Heart right ventricle (tissue), 16 donors: ENCODE measurements at regions of chr15 and their contacts with region 1.

Region 1: GRCh38 chr15:57146506-57147201 is 228.2 kb downstream of the TCF12 start:
- DNase-seq: peak in 1 of 2 donors; percentile 57
- ATAC-seq: peak in 7 of 8 donors; percentile 39 to 76 (median 65)
- H3K4me3 ChIP-seq: peak overlapping the region in 7 of 10 donors; percentile 9 to 43 (median 33)
- H3K27ac ChIP-seq: peak overlapping the region in 7 of 10 donors; percentile 36 to 62 (median 54)
- H3K4me1 ChIP-seq: peaks cover 0 to 53% (median 44%) of the 10 kb centered on the region in 9 donors
- H3K27me3 ChIP-seq: no peaks in the 10 kb centered on the region
- CTCF ChIP-seq: peak; percentile 55 to 88 (median 82)

Region 2: GRCh38 chr15:56496635-56497034 is 650.0 kb before region 1 on chr15:
- intact Hi-C with region 1: loop called in 2 of 10 experiments (anchors 5 to 10 kb)
- DNase-seq: peak in 1 of 2 donors; percentile 6
- ATAC-seq: peak in 6 of 8 donors; percentile 61 to 85 (median 80)
- H3K4me3 ChIP-seq: no peak overlapping the region
- H3K27ac ChIP-seq: no peak overlapping the region
- H3K4me1 ChIP-seq: peaks cover 0 to 4% (median 0%) of the 10 kb centered on the region in 9 donors
- H3K27me3 ChIP-seq: peaks cover 0 to 5% (median 0%) of the 10 kb centered on the region in 7 donors
- CTCF ChIP-seq: peak; percentile 24 to 85 (median 75)

Region 3: GRCh38 chr15:56886932-56887781 is 259.5 kb before region 1 on chr15:
- intact Hi-C with region 1: loop called in 1 of 10 experiments (anchors 10 kb)
- DNase-seq: peak; percentile 95 to 96
- ATAC-seq: peak; percentile 97 to 99 (median 98)
- H3K4me3 ChIP-seq: peak overlapping the region; percentile 51 to 78 (median 68)
- H3K27ac ChIP-seq: peak overlapping the region; percentile 96 to 99 (median 98)
- H3K4me1 ChIP-seq: peaks cover 0 to 33% (median 21%) of the 10 kb centered on the region in 9 donors
- H3K27me3 ChIP-seq: no peaks in the 10 kb centered on the region
- CTCF ChIP-seq: peak in 4 of 9 donors; percentile 10 to 32 (median 20)

Region 4: GRCh38 chr15:56931639-56932508 is 214.8 kb before region 1 on chr15:
- intact Hi-C with region 1: no loop called
- DNase-seq: no peak
- ATAC-seq: peak in 4 of 8 donors; percentile 55 to 73 (median 61)
- H3K4me3 ChIP-seq: no peak overlapping the region
- H3K27ac ChIP-seq: no peak overlapping the region
- H3K4me1 ChIP-seq: peaks cover 0 to 79% (median 65%) of the 10 kb centered on the region in 9 donors
- H3K27me3 ChIP-seq: no peaks in the 10 kb centered on the region
- CTCF ChIP-seq: no peak

Region 5: DNA sequence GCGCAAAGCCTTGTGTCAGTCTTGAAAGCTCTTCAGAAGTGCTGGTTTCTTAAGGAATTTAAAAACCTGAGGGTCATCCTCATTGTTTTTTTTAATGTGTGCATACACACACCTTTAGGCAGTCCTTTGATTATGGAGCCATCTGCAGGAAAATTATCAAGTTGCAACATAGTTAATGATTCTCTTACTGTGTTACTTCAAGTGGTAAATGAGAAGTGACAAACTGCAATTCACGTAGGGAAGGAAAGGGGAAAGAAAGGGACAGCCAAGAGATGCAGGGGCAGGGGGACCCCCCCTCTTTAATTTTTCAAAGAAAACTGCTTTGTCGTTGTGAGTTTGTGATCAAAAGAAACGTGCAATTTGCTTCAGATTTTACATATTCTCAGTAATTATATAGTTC is 67.2 kb after region 1 on chr15:
- intact Hi-C with region 1: loop called (anchors 1 to 10 kb)
- DNase-seq: peak in 1 of 2 donors; percentile 9
- ATAC-seq: peak; percentile 47 to 82 (median 76)
- H3K4me3 ChIP-seq: no peak overlapping the region
- H3K27ac ChIP-seq: no peak overlapping the region
- H3K4me1 ChIP-seq: peaks cover 3 to 56% (median 25%) of the 10 kb centered on the region in 9 donors
- H3K27me3 ChIP-seq: no peaks in the 10 kb centered on the region
- CTCF ChIP-seq: peak; percentile 39 to 79 (median 62)

Region 6: GRCh38 chr15:57306161-57306943 is 159.7 kb after region 1 on chr15:
- intact Hi-C with region 1: loop called (anchors 1 to 10 kb)
- DNase-seq: peak; percentile 87 to 92
- ATAC-seq: peak; percentile 88 to 95 (median 91)
- H3K4me3 ChIP-seq: peak overlapping the region; percentile 19 to 84 (median 58)
- H3K27ac ChIP-seq: peak overlapping the region in 6 of 10 donors; percentile 30 to 54 (median 34)
- H3K4me1 ChIP-seq: peaks cover 0 to 18% (median 12%) of the 10 kb centered on the region in 9 donors
- H3K27me3 ChIP-seq: no peaks in the 10 kb centered on the region
- CTCF ChIP-seq: peak; percentile 82 to 96 (median 91)

Region 7: DNA sequence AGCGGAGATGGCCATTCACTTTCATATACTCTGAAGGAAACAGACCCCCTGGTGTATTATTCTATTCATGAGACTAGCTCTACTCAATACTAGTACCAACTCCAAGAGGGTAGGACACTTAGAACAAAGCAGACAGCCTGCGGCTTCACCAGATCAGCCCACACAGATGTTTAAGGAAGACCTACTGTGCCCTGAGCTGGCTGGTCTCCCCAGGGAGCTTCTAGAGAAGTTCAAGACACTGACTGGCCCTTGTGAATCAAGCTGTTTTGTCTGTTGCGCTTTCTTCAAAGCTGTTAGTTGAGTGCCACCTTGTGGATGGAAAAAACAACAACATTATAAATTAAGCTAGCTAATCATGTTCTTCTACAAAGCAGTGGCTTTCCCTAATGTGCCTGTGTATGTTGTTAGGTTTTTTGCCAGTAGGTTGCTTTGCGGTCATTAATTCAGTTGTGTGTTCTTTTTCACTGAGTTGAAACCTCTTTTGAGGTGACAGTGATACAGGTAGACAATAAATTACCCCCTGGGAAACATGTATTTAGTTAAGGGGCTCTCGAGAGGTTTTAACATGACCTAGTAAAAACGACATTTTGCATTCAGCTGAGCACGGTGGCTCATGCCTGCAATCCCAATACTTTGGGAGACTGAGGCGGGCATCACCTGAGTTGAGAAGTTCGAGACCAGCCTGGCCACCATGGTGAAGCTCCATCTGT is 380.9 kb after region 1 on chr15:
- intact Hi-C with region 1: loop called in 7 of 10 experiments (anchors 5 to 10 kb)
- DNase-seq: peak in 1 of 2 donors; percentile 58
- ATAC-seq: peak; percentile 62 to 78 (median 71)
- H3K4me3 ChIP-seq: no peak overlapping the region
- H3K27ac ChIP-seq: no peak overlapping the region
- H3K4me1 ChIP-seq: peaks cover 0 to 18% (median 3%) of the 10 kb centered on the region in 9 donors
- H3K27me3 ChIP-seq: no peaks in the 10 kb centered on the region
- CTCF ChIP-seq: peak; percentile 49 to 81 (median 66)